ENCODE measurements at regions of chr1 and their contacts with region 1.

Region 1: GRCh38 chr1:167066333-167067122 is 23.6 kb downstream of the GPA33 start:
- DNase-seq: peak; percentile 43
- H3K4me3 ChIP-seq: no peak overlapping the region
- H3K27ac ChIP-seq: no peak overlapping the region
- H3K4me1 ChIP-seq: no peaks in the 10 kb centered on the region
- H3K27me3 ChIP-seq: peaks cover 0 to 9% of the 10 kb centered on the region in 2 experiments
- CTCF ChIP-seq: peak; percentile 94 to 98
- POLR2A ChIP-seq: no peak

Region 2: DNA sequence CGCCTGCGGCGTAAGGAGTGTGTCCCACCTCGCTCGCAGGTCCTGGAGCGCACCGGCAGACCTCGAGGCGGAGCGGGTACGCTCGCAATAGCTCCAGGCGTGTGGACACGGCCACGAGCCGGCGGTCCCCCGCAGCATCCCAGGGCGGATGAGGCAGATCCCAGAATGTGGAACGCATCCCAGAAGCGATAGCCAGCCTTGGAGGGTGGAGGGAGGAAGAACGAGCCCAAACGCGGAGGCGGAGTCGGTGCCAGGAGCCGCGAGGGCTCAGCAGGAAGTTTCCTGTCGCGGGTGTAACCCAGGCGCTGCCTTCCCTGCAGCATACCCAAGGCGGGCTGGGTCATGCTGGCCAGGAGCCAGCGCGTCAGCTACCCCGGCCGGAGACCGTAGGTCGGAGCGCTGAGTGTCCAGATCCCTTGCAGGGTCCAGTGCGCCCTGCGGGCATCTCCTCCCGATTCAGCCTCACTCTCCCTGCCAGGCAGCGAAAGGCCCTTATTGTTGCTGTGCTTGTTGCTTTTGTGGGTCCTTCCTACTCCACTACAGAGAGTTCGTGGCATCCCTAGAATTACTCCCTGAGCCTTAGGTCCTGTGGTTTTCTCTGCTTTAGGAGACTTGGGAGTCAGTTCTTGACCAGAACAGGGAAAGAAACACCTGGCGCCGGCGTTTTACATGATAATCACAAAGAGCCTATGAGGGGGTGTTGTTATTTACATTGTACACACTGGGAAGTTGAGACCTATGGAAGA is 55.0 kb after region 1 on chr1:
- CTCF ChIA-PET with region 1: no interaction called
- POLR2A ChIA-PET with region 1: no interaction called
- dilution Hi-C with region 1: no loop called
- intact Hi-C with region 1: loop called (anchors 5 kb)
- DNase-seq: peak; percentile 6
- H3K4me3 ChIP-seq: no peak overlapping the region
- H3K27ac ChIP-seq: no peak overlapping the region
- H3K4me1 ChIP-seq: no peaks in the 10 kb centered on the region
- H3K27me3 ChIP-seq: peaks cover 5 to 9% of the 10 kb centered on the region in 2 experiments
- CTCF ChIP-seq: no peak
- POLR2A ChIP-seq: no peak

Region 3: GRCh38 chr1:167442124-167442848 is 375.8 kb after region 1 on chr1:
- CTCF ChIA-PET with region 1: interaction called, 14 read pairs
- POLR2A ChIA-PET with region 1: no interaction called
- dilution Hi-C with region 1: no loop called
- intact Hi-C with region 1: loop called (anchors 1 kb)
- DNase-seq: peak; percentile 49
- H3K4me3 ChIP-seq: no peak overlapping the region
- H3K27ac ChIP-seq: no peak overlapping the region
- H3K4me1 ChIP-seq: no peaks in the 10 kb centered on the region
- H3K27me3 ChIP-seq: peaks cover 0 to 4% of the 10 kb centered on the region in 2 experiments
- CTCF ChIP-seq: peak; percentile 81 to 88
- POLR2A ChIP-seq: no peak

Region 4: DNA sequence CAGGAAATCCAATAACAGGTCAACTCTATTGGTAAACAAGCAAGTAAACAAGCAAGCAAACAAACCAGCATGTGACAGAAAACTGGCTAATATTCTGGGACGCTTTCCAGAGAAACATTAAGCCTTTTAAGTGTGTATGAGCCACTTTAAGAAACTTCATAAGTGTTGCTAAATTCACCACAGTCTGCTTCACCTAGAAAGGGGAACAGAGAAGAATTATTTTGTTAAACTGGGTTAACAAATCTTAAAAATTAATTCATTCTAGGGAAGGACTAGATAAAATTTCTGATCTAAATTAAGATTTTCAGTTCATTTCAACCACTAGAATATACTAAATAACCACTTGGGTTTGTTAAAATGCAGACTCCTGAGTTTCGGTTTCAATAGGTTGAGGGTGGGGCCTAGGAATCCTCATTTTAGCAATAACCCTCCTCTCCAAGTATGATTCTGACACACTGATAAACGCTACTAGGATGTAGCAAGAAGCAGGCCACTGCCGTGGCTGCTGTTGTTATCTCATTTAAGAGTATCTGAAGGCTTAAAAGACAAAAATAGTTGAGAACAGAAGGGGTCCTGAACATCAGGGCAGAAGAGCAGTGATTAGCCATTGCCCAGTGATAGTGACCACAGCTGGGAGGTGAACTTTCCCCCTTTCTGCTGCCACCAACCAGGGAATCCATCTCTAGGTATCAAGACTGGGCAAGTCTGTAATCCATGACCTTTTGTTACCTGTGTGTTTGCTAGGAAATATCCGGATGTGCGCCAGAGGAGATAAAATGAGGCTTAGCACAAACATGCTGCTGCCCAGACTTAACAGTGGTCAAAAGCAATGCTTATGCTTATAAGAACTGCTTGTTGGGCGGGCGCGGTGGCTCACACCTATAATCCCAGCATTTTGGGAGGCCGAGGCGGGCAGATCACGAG is 475.8 kb after region 1 on chr1:
- CTCF ChIA-PET with region 1: interaction called, 21 read pairs
- POLR2A ChIA-PET with region 1: no interaction called
- dilution Hi-C with region 1: no loop called
- intact Hi-C with region 1: no loop called
- DNase-seq: no peak
- H3K4me3 ChIP-seq: no peak overlapping the region
- H3K27ac ChIP-seq: no peak overlapping the region
- H3K4me1 ChIP-seq: no peaks in the 10 kb centered on the region
- H3K27me3 ChIP-seq: no peaks in the 10 kb centered on the region
- CTCF ChIP-seq: no peak
- POLR2A ChIP-seq: no peak

Region 5: GRCh38 chr1:167687919-167688519 is 621.5 kb after region 1 on chr1:
- CTCF ChIA-PET with region 1: no interaction called
- POLR2A ChIA-PET with region 1: no interaction called
- dilution Hi-C with region 1: no loop called
- intact Hi-C with region 1: loop called (anchors 5 kb)
- DNase-seq: peak; percentile 86
- H3K4me3 ChIP-seq: no peak overlapping the region
- H3K27ac ChIP-seq: no peak overlapping the region
- H3K4me1 ChIP-seq: peaks cover 4% of the 10 kb centered on the region
- H3K27me3 ChIP-seq: peaks cover 5 to 6% of the 10 kb centered on the region in 2 experiments
- CTCF ChIP-seq: peak; percentile 77 to 84
- POLR2A ChIP-seq: no peak